Heart left ventricle (tissue), 16 donors: ENCODE measurements at regions of chr11 and their contacts with region 1.

Region 1: DNA sequence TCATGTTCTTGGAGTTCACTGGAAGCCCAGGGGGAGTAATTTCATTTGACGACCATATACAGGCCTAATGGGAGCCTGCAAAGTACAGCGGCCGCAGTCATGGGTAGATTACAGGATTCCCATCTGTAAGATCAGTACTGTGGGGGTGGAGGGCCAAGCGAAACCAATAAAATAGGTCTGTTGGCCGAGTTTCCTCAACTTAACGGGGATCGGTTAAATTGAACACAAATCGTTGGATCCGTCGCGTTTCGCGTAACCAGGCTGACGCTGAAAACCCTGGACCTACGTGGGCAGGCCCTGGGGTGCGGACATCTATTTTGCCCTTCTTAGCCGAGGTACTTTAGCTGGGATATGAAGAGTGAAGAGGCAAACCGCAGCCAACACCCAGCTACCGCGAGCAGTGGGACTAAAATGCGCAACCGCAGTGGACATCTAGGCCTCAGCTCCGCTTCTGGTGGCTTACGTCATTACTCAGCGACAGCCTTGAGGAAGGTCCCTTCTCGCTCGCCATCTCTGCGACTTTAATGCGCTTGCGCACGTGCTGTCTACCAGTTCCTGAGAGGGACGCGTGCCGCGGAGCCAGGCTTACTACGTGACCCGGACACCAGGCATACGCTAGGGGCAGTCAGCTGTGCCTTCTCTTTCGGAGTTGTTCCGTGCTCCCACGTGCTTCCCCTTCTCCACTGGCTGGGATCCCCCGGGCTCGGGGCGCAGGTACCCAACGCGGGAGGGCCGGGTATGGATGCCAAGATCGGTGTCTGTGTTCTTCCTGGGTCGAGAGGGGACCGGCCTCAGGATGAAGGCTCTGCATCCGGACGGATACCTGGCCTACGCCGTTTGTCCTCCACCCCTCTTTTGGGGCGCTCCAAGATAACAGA is at the start of gene NAT10:
- DNase-seq: peak; percentile 96 to 98 (median 97)
- ATAC-seq: peak; percentile 96 to 99 (median 98)
- H3K4me3 ChIP-seq: peak within 1 kb of the TSS; percentile 69 to 98 (median 88)
- H3K27ac ChIP-seq: peak within 1 kb of the TSS; percentile 83 to 97 (median 92)
- H3K4me1 ChIP-seq: peaks cover 0 to 25% (median 14%) of the 10 kb centered on the region in 12 donors
- H3K27me3 ChIP-seq: no peaks in the 10 kb centered on the region
- CTCF ChIP-seq: peak in 4 of 12 donors; percentile 6 to 23 (median 15)
- POLR2A ChIP-seq: peak in 1 of 2 donors; percentile 84
- total RNA-seq, gene NAT10: 14.5 to 27.1 (median 21.2) TPM

Region 2: DNA sequence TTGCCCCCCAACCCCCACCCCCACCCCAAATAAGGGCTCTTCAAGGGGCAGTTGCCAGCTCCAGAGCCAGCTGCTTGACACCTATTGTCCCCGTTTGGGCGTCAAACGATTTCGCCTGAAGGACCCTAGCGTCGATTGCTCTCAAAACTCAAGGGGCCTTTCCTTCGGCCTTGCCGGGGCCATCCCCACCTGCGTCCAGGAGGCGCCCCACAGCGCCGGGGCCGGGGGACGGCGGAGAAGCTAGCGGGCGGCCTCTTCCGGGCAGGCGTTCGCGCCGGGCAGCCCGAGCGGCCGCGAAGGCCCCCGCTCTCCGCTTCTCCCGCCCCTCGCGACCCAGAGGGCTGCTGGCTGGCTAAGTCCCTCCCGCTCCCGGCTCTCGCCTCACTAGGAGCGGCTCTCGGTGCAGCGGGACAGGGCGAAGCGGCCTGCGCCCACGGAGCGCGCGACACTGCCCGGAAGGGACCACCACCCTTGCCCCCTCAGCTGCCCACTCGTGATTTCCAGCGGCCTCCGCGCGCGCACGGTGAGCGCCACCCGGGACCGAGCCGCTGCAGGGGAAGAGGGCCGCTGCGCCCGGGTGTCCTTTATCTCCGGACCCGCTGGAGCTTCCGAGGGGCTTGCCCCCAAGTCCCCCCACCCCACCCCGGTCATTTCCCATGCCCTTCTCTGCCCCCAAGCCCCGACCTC is 53.8 kb before region 1 on chr11 and contains the start of gene CAPRIN1:
- intact Hi-C with region 1: loop called (anchors 1 to 10 kb)
- DNase-seq: peak; percentile 89 to 95 (median 92)
- ATAC-seq: peak; percentile 81 to 94 (median 90)
- H3K4me3 ChIP-seq: peak within 1 kb of the TSS; percentile 90 to 99 (median 94)
- H3K27ac ChIP-seq: peak within 1 kb of the TSS; percentile 96 to 100 (median 99)
- H3K4me1 ChIP-seq: peaks cover 0 to 45% (median 37%) of the 10 kb centered on the region in 12 donors
- H3K27me3 ChIP-seq: no peaks in the 10 kb centered on the region
- CTCF ChIP-seq: peak in 1 of 12 donors; percentile 14
- POLR2A ChIP-seq: peak in 1 of 2 donors; percentile 69
- total RNA-seq, gene CAPRIN1: 94.2 to 134 (median 114) TPM

Region 3: GRCh38 chr11:34068111-34068510 is 37.2 kb before region 1 on chr11:
- intact Hi-C with region 1: loop called in 1 of 10 experiments (anchors 5 kb)
- DNase-seq: no peak
- ATAC-seq: peak; percentile 76 to 91 (median 90)
- H3K4me3 ChIP-seq: no peak overlapping the region
- H3K27ac ChIP-seq: peak overlapping the region in 8 of 12 donors; percentile 0 to 44 (median 28)
- H3K4me1 ChIP-seq: peaks cover 0 to 69% (median 41%) of the 10 kb centered on the region in 12 donors
- H3K27me3 ChIP-seq: no peaks in the 10 kb centered on the region
- CTCF ChIP-seq: no peak
- POLR2A ChIP-seq: no peak